ENCODE measurements at regions of chr6 and their contacts with region 1.

Region 1: GRCh38 chr6:35161776-35162607 is 20.9 kb upstream of the TCP11 start:
- DNase-seq: no peak
- ATAC-seq: no peak
- H3K4me3 Mint-ChIP-seq: no peak overlapping the region
- H3K27ac Mint-ChIP-seq: no peak overlapping the region
- H3K4me1 Mint-ChIP-seq: no peaks in the 10 kb centered on the region
- H3K27me3 Mint-ChIP-seq: peaks cover 38% of the 10 kb centered on the region

Region 2: GRCh38 chr6:35146453-35146852 is 15.5 kb before region 1 on chr6:
- CTCF ChIA-PET with region 1: interaction called, 13 read pairs
- POLR2A ChIA-PET with region 1: no interaction called
- DNase-seq: peak; percentile 48
- ATAC-seq: peak; percentile 44
- H3K4me3 Mint-ChIP-seq: no peak overlapping the region
- H3K27ac Mint-ChIP-seq: no peak overlapping the region
- H3K4me1 Mint-ChIP-seq: peaks cover 31% of the 10 kb centered on the region
- H3K27me3 Mint-ChIP-seq: peaks cover 14% of the 10 kb centered on the region